ENCODE measurements at regions of chr1 and their contacts with region 1.

Region 1: GRCh38 chr1:182789138-182790076 is at the start of gene NPL:
- DNase-seq: peak; percentile 86 to 89 (median 88)
- H3K4me3 ChIP-seq: peak within 1 kb of the TSS; percentile 69 to 88
- H3K4me3 Mint-ChIP-seq: peak within 1 kb of the TSS; percentile 89 to 94 (median 92)
- H3K27ac ChIP-seq: peak within 1 kb of the TSS; percentile 67
- H3K27ac Mint-ChIP-seq: peak within 1 kb of the TSS; percentile 78 to 92 (median 90)
- H3K4me1 ChIP-seq: peaks cover 13% of the 10 kb centered on the region
- H3K4me1 Mint-ChIP-seq: peaks cover 10 to 16% (median 11%) of the 10 kb centered on the region in 4 donors
- H3K27me3 ChIP-seq: no peaks in the 10 kb centered on the region
- H3K27me3 Mint-ChIP-seq: no peaks in the 10 kb centered on the region
- total RNA-seq, gene NPL: 9.6 TPM

Region 2: GRCh38 chr1:182029379-182030331 is 759.8 kb before region 1 on chr1:
- CTCF ChIA-PET with region 1: no interaction called
- POLR2A ChIA-PET with region 1: no interaction called
- intact Hi-C with region 1: loop called (anchors 1 kb)
- DNase-seq: peak; percentile 98
- H3K4me3 ChIP-seq: peak overlapping the region; percentile 92 to 94
- H3K4me3 Mint-ChIP-seq: peak overlapping the region; percentile 91 to 100 (median 96)
- H3K27ac ChIP-seq: peak overlapping the region; percentile 77
- H3K27ac Mint-ChIP-seq: peak overlapping the region; percentile 84 to 100 (median 99)
- H3K4me1 ChIP-seq: peaks cover 16% of the 10 kb centered on the region
- H3K4me1 Mint-ChIP-seq: peaks cover 14 to 21% (median 16%) of the 10 kb centered on the region in 4 donors
- H3K27me3 ChIP-seq: no peaks in the 10 kb centered on the region
- H3K27me3 Mint-ChIP-seq: no peaks in the 10 kb centered on the region

Region 3: GRCh38 chr1:182756423-182756822 is 33.0 kb before region 1 on chr1:
- CTCF ChIA-PET with region 1: no interaction called
- POLR2A ChIA-PET with region 1: no interaction called
- intact Hi-C with region 1: no loop called
- DNase-seq: no peak
- H3K4me3 ChIP-seq: no peak overlapping the region
- H3K4me3 Mint-ChIP-seq: no peak overlapping the region
- H3K27ac ChIP-seq: no peak overlapping the region
- H3K27ac Mint-ChIP-seq: no peak overlapping the region
- H3K4me1 ChIP-seq: no peaks in the 10 kb centered on the region
- H3K4me1 Mint-ChIP-seq: no peaks in the 10 kb centered on the region
- H3K27me3 ChIP-seq: no peaks in the 10 kb centered on the region
- H3K27me3 Mint-ChIP-seq: peaks cover 0 to 8% of the 10 kb centered on the region in 2 donors

Region 4: GRCh38 chr1:182826892-182827291 is 37.5 kb after region 1 on chr1:
- CTCF ChIA-PET with region 1: no interaction called
- POLR2A ChIA-PET with region 1: no interaction called
- intact Hi-C with region 1: loop called (anchors 1 kb)
- DNase-seq: no peak
- H3K4me3 ChIP-seq: no peak overlapping the region
- H3K4me3 Mint-ChIP-seq: no peak overlapping the region
- H3K27ac ChIP-seq: no peak overlapping the region
- H3K27ac Mint-ChIP-seq: no peak overlapping the region
- H3K4me1 ChIP-seq: no peaks in the 10 kb centered on the region
- H3K4me1 Mint-ChIP-seq: no peaks in the 10 kb centered on the region
- H3K27me3 ChIP-seq: no peaks in the 10 kb centered on the region
- H3K27me3 Mint-ChIP-seq: no peaks in the 10 kb centered on the region

Measured in CD4-positive, alpha-beta memory T cell (primary cell).